Activated CD8-positive, alpha-beta T cell treated with anti-CD3 and anti-CD28 coated beads for 36 hours (primary cell): ENCODE measurements at regions of chr9 and their contacts with region 1.

Region 1: GRCh38 chr9:97468658-97469448 is 32.6 kb upstream of the TMOD1 start:
- DNase-seq: peak; percentile 64
- ATAC-seq: peak; percentile 83
- H3K4me3 Mint-ChIP-seq: no peak overlapping the region
- H3K27ac Mint-ChIP-seq: no peak overlapping the region
- H3K4me1 Mint-ChIP-seq: no peaks in the 10 kb centered on the region
- H3K27me3 Mint-ChIP-seq: no peaks in the 10 kb centered on the region
- CTCF ChIP-seq: peak; percentile 49

Region 2: GRCh38 chr9:97398999-97399758 is 69.7 kb before region 1 on chr9:
- CTCF ChIA-PET with region 1: no interaction called
- POLR2A ChIA-PET with region 1: no interaction called
- intact Hi-C with region 1: no loop called
- DNase-seq: peak; percentile 80
- ATAC-seq: peak; percentile 80
- H3K4me3 Mint-ChIP-seq: no peak overlapping the region
- H3K27ac Mint-ChIP-seq: no peak overlapping the region
- H3K4me1 Mint-ChIP-seq: peaks cover 16% of the 10 kb centered on the region
- H3K27me3 Mint-ChIP-seq: peaks cover 4% of the 10 kb centered on the region
- CTCF ChIP-seq: peak; percentile 98

Region 3: GRCh38 chr9:97445119-97445701 is 23.6 kb before region 1 on chr9:
- CTCF ChIA-PET with region 1: interaction called, 11 read pairs
- POLR2A ChIA-PET with region 1: no interaction called
- intact Hi-C with region 1: no loop called
- DNase-seq: no peak
- ATAC-seq: no peak
- H3K4me3 Mint-ChIP-seq: no peak overlapping the region
- H3K27ac Mint-ChIP-seq: no peak overlapping the region
- H3K4me1 Mint-ChIP-seq: no peaks in the 10 kb centered on the region
- H3K27me3 Mint-ChIP-seq: no peaks in the 10 kb centered on the region
- CTCF ChIP-seq: no peak

Region 4: GRCh38 chr9:97479496-97480159 is 10.8 kb after region 1 on chr9:
- CTCF ChIA-PET with region 1: interaction called, 24 read pairs
- POLR2A ChIA-PET with region 1: no interaction called
- intact Hi-C with region 1: no loop called
- DNase-seq: no peak
- ATAC-seq: no peak
- H3K4me3 Mint-ChIP-seq: no peak overlapping the region
- H3K27ac Mint-ChIP-seq: no peak overlapping the region
- H3K4me1 Mint-ChIP-seq: no peaks in the 10 kb centered on the region
- H3K27me3 Mint-ChIP-seq: no peaks in the 10 kb centered on the region
- CTCF ChIP-seq: no peak

Region 5: GRCh38 chr9:97487107-97487506 is 18.3 kb after region 1 on chr9:
- CTCF ChIA-PET with region 1: interaction called, 18 read pairs
- POLR2A ChIA-PET with region 1: no interaction called
- intact Hi-C with region 1: no loop called
- DNase-seq: no peak
- ATAC-seq: no peak
- H3K4me3 Mint-ChIP-seq: no peak overlapping the region
- H3K27ac Mint-ChIP-seq: no peak overlapping the region
- H3K4me1 Mint-ChIP-seq: no peaks in the 10 kb centered on the region
- H3K27me3 Mint-ChIP-seq: no peaks in the 10 kb centered on the region
- CTCF ChIP-seq: peak; percentile 21

Region 6: GRCh38 chr9:97501177-97501971 is 32.5 kb after region 1 on chr9 and contains the start of gene TMOD1:
- CTCF ChIA-PET with region 1: interaction called, 10 read pairs
- POLR2A ChIA-PET with region 1: no interaction called
- intact Hi-C with region 1: no loop called
- DNase-seq: peak; percentile 50
- ATAC-seq: peak; percentile 86
- H3K4me3 Mint-ChIP-seq: peak within 1 kb of the TSS; percentile 62
- H3K27ac Mint-ChIP-seq: no peak within 1 kb of the TSS
- H3K4me1 Mint-ChIP-seq: peaks cover 12% of the 10 kb centered on the region
- H3K27me3 Mint-ChIP-seq: peaks cover 47% of the 10 kb centered on the region
- CTCF ChIP-seq: no peak
- total RNA-seq, gene TMOD1: 0.47 to 0.60 TPM